ENCODE measurements at regions of chr6 and their contacts with region 1.

Region 1: DNA sequence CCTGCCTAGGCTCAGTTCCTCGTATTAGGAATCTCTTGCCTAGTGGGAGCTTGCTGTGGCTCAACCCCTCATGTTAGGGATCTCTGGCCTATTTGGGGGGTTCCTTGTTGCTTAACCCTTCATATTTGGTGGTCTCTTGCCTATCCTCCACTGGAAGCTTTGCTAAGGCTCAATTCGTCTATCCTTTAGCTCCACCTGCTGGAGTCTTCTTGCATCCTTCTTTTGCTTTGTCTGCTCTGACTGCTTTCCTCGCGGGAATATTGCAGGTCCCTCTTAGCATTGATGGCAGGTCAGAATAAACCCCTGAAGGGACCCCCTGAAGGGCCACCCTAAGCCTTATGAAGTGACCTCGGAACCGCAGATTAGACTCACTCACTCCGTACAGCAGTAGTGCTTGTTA is 203.0 kb upstream of the TBX18 start:
- DNase-seq: peak; percentile 15
- ATAC-seq: no peak
- H3K4me3 ChIP-seq: no peak overlapping the region
- H3K27ac ChIP-seq: no peak overlapping the region
- H3K4me1 ChIP-seq: no peaks in the 10 kb centered on the region
- H3K27me3 ChIP-seq: no peaks in the 10 kb centered on the region
- CTCF ChIP-seq: peak; percentile 66

Region 2: DNA sequence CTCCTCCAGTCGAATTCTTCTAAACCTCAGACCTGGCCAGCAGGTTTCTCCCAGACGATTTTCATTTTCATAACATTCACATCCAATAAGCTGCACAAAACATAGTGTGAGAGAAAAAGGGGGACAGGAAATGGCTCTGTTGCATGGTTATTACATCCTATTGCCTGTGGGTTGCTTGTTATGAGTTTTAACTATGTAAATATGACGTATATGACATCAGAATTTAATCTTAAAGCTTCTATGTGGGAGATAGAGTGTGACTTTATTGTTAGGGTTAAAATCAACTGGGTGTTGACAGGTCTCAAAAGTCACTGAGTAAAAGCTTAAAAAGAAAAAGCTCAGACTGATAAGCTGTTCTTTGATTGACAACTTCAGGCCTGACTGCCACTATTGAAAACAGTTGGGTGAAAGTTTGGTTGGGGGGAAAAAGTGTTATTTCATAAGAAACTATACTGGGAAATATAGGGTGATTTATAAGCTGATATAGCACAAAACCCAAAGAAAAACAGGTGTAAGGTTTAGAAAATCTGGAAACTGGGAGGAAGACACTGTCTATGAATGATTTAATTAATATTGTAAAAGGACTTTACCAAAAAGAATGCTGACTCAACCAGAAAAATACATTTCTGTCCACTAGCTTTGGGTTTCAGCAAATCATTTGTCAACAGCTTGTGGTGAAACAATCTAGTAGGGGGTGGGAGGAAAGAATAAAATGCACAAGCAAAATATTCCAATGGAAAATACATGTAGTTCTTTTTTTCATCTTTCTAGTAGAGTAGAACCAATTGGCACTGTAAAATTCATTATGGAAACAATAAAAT is 605.8 kb before region 1 on chr6:
- CTCF ChIA-PET with region 1: no interaction called
- POLR2A ChIA-PET with region 1: no interaction called
- in situ Hi-C with region 1: no loop called
- intact Hi-C with region 1: no loop called
- DNase-seq: no peak
- ATAC-seq: no peak
- H3K4me3 ChIP-seq: no peak overlapping the region
- H3K27ac ChIP-seq: no peak overlapping the region
- H3K4me1 ChIP-seq: no peaks in the 10 kb centered on the region
- H3K27me3 ChIP-seq: no peaks in the 10 kb centered on the region
- CTCF ChIP-seq: no peak

Region 3: DNA sequence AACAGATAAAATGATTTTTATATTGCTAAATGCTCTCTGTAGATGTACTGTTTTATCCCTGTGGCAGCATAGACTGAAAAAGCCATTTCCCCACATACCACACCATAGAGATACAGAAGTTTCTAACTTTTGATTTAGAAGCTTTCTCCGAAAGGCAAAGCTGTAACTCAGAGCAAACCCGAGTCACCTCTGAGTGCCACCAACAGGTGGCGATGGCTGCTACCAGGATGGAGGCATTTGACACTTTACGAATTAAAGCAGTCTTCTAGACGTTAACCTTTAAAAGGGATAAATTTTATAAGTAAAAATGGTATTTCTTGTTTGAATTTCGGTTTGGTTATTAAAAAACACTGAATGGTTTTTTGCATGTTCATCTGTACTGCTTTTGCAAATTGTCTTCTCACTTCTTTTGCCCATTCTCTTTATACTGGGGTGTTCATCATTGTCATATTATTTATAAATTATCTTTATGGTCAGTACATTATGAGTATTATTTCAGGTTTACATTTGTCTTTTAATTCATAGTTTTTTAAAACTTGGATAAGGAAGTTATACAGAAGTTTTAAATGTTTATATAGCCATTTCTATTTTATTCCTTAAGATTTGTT is 539.0 kb before region 1 on chr6:
- CTCF ChIA-PET with region 1: no interaction called
- POLR2A ChIA-PET with region 1: no interaction called
- in situ Hi-C with region 1: no loop called
- intact Hi-C with region 1: loop called (anchors 5 kb)
- DNase-seq: peak; percentile 28
- ATAC-seq: no peak
- H3K4me3 ChIP-seq: no peak overlapping the region
- H3K27ac ChIP-seq: no peak overlapping the region
- H3K4me1 ChIP-seq: no peaks in the 10 kb centered on the region
- H3K27me3 ChIP-seq: no peaks in the 10 kb centered on the region; the same call in 1 of the 2 replicates
- CTCF ChIP-seq: peak; percentile 82

Region 4: GRCh38 chr6:84764332-84765049 is 202.9 kb before region 1 on chr6 and contains the start of gene TBX18:
- CTCF ChIA-PET with region 1: no interaction called
- POLR2A ChIA-PET with region 1: no interaction called
- in situ Hi-C with region 1: no loop called
- intact Hi-C with region 1: loop called (anchors 10 kb)
- DNase-seq: peak; percentile 27
- ATAC-seq: peak; percentile 89
- H3K4me3 ChIP-seq: peak within 1 kb of the TSS; percentile 55 to 67
- H3K27ac ChIP-seq: peak within 1 kb of the TSS; percentile 72
- H3K4me1 ChIP-seq: peaks cover 6% of the 10 kb centered on the region; the same call in 1 of the 2 replicates
- H3K27me3 ChIP-seq: peaks cover 2% of the 10 kb centered on the region; the same call in 1 of the 2 replicates
- CTCF ChIP-seq: no peak
- total RNA-seq, gene TBX18: 10.1 TPM

Measured in Panc1 (cell line).